Heart left ventricle (tissue), 16 donors: ENCODE measurements at regions of chr3 and their contacts with region 1.

Region 1: DNA sequence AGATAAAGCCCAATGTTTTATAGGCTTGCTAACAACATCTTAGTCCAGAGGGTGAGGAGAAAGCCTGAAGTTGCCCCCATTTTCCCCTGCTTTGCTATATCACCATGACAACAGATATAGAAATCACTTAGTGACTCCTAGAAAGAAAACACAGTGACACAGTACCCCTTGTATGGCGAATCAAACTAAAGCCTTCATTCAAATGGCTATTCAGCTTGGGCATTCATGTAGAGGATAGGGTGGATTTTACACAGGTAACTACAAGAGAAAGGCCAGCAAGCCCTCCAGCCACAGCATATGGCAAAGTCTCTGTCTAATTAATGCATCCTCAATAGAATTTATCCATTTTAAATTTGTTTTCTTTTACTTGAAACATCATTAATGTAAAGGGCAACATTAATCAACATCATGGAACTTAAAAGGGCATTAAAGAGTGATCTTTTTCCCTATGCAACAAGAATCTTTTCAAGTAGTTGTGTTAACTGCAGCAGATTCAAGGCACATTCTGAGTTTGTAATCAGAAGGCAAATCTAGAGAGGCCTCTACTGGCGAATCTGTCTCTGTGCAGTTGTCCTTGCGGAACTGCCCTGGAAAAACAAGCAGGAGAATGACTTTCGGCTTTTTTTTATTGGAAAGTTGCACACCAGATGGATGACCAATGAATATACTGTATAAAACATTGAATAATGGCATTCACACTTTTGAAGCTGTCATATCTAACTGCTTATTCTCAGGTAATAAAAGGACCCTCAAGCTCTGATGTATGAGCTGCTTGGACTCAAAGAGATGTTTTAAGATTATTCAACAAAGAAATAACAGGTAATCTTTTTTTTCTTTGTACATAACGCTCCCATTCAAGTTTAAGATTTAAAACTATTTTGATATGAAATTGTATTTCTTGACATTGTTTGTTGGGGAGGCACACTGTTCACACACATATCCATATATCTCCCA is 621.7 kb upstream of the AGTR1 start:
- DNase-seq: no peak
- ATAC-seq: no peak
- H3K4me3 ChIP-seq: no peak overlapping the region
- H3K27ac ChIP-seq: no peak overlapping the region
- H3K4me1 ChIP-seq: no peaks in the 10 kb centered on the region
- H3K27me3 ChIP-seq: no peaks in the 10 kb centered on the region
- CTCF ChIP-seq: peak in 11 of 12 donors; percentile 11 to 68 (median 44)
- POLR2A ChIP-seq: no peak

Region 2: DNA sequence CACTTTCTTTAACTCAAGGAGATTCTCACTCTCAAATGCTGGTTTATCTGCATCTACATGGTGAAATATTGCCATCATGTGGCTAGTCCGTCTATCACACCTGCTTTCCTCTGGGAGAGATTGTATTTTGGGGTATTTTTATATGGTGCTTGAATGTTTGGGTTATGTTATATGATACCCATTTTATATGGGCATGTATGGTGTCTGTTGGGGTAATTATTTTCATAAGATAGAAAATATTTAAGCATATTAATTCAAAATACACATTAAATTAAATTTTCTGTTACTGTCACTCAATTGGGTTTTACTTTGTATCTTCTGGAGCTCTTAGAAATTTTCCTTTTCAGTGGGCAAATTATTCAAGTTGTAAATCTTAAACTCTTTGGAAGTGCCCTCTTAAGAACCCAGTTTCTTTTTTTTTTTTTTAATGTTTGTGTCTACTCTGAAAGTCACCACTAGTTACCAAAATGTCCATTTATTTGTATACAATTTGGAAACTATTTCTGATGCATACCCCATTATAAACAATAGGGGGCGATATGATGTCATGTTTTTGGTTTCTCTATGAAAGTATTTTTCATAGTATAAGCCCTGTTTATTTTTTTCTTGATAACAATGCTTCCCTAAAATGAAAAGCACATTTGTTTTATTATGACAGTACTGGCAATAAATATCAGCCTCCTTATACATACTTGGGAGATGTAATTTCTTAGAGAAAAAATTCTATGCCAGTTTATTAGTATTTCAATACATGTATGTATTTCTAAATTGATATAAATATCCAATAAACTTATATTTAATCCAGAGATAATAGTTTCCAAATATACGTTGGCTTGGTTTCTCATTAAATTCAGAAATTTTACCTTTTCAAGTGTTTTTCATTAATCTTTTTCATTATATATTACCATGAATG is 1434.8 kb before region 1 on chr3:
- intact Hi-C with region 1: loop called in 1 of 10 experiments (anchors 10 kb)
- DNase-seq: no peak
- ATAC-seq: no peak
- H3K4me3 ChIP-seq: no peak overlapping the region
- H3K27ac ChIP-seq: no peak overlapping the region
- H3K4me1 ChIP-seq: no peaks in the 10 kb centered on the region
- H3K27me3 ChIP-seq: no peaks in the 10 kb centered on the region
- CTCF ChIP-seq: peak; percentile 25 to 57 (median 42)
- POLR2A ChIP-seq: no peak

Region 3: DNA sequence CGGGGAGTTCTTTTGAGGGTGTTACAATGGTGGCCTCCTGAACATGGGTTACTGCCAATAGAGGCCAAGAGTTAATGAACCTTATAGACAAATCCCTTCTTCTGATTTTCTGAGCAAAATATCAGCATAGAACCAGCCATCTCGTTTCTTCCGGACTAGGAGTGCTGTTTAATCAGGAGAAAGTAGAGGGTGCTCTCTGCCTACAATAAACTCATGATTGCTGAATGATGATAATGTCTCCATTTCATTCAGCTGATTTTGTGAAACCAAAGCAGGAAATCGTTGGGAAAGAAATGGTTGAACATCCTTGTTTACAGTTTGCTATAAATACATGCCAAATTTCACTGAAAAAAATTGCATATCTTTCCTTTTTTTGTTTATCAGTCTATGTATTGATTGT is 1328.1 kb before region 1 on chr3:
- intact Hi-C with region 1: loop called in 1 of 10 experiments (anchors 10 kb)
- DNase-seq: no peak
- ATAC-seq: no peak
- H3K4me3 ChIP-seq: no peak overlapping the region
- H3K27ac ChIP-seq: no peak overlapping the region
- H3K4me1 ChIP-seq: no peaks in the 10 kb centered on the region
- H3K27me3 ChIP-seq: no peaks in the 10 kb centered on the region
- CTCF ChIP-seq: peak in 6 of 12 donors; percentile 16 to 50 (median 44)
- POLR2A ChIP-seq: no peak

Region 4: DNA sequence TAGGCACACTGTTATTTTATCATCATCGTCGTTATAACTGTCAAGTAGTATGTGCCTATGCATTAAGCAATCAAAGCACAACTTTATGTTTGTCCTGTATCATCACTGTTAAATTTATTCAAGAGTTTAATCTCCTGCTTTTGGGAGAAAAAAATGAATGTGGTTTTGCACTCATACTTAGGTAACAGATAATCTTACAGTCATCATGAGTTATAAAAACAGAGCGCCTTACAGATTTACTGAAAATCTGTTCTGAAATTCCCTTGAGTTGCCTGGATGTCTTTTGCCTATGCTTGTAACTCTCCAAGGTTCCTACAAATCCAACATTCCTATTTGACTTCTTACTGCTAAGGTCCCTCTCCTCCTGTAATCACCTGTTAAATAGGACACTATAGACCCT is 977.0 kb before region 1 on chr3:
- intact Hi-C with region 1: no loop called
- DNase-seq: no peak
- ATAC-seq: no peak
- H3K4me3 ChIP-seq: no peak overlapping the region
- H3K27ac ChIP-seq: no peak overlapping the region
- H3K4me1 ChIP-seq: no peaks in the 10 kb centered on the region
- H3K27me3 ChIP-seq: no peaks in the 10 kb centered on the region
- CTCF ChIP-seq: no peak
- POLR2A ChIP-seq: no peak

Region 5: GRCh38 chr3:147119989-147120388 is 956.1 kb before region 1 on chr3:
- intact Hi-C with region 1: loop called in 1 of 10 experiments (anchors 10 kb)
- DNase-seq: no peak
- ATAC-seq: no peak
- H3K4me3 ChIP-seq: no peak overlapping the region
- H3K27ac ChIP-seq: no peak overlapping the region
- H3K4me1 ChIP-seq: no peaks in the 10 kb centered on the region
- H3K27me3 ChIP-seq: no peaks in the 10 kb centered on the region
- CTCF ChIP-seq: peak in 6 of 12 donors; percentile 19 to 42 (median 40)
- POLR2A ChIP-seq: no peak

Region 6: GRCh38 chr3:147619921-147620560 is 456.0 kb before region 1 on chr3:
- intact Hi-C with region 1: loop called in 1 of 10 experiments (anchors 10 kb)
- DNase-seq: no peak
- ATAC-seq: no peak
- H3K4me3 ChIP-seq: no peak overlapping the region
- H3K27ac ChIP-seq: no peak overlapping the region
- H3K4me1 ChIP-seq: no peaks in the 10 kb centered on the region
- H3K27me3 ChIP-seq: no peaks in the 10 kb centered on the region
- CTCF ChIP-seq: no peak
- POLR2A ChIP-seq: no peak

Region 7: GRCh38 chr3:148372206-148372875 is 296.3 kb after region 1 on chr3:
- intact Hi-C with region 1: no loop called
- DNase-seq: no peak
- ATAC-seq: no peak
- H3K4me3 ChIP-seq: no peak overlapping the region
- H3K27ac ChIP-seq: no peak overlapping the region
- H3K4me1 ChIP-seq: no peaks in the 10 kb centered on the region
- H3K27me3 ChIP-seq: no peaks in the 10 kb centered on the region
- CTCF ChIP-seq: no peak
- POLR2A ChIP-seq: no peak